ENCODE measurements at regions of chr9 and their contacts with region 1.

Region 1: DNA sequence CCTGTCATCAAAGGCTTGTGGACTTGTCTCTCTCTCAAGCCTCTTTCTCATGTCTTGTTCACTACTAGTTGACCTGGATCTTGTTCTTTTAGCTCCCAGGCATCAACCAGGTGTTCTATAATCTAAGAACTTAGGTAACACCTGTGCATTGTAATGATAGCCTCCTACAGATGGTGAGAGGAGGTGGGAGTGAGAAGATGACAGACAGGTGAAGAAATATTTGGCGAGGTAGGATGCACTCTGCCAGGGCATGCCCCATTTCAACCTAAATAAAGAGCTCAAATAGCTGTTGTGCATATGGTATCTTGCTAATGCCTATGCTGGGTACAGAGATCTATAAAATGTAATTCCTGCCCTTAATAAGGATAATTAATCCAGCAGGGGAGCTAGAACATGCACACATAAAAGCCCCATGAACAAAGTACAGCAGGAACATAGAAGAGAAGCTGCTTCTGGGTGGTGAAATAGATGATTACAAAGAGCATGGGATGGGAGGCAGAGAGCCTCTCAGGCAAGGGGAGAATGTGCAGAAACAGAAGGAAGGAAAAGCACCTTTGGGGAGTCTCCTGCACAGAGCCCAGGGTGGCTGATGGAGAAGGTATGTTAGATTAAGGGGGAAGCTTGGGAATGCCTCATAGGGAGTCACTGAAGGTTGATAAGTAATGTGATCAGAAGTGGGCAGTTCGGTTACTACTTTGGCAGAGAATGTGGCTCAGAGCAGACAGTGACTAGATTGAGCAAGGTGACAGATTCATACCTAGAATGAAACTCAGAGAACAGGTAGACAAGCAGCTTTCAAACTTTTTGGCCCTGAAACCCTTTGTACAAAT is 28.0 kb upstream of the PLIN2 start:
- DNase-seq: peak; percentile 26
- H3K4me3 Mint-ChIP-seq: no peak overlapping the region
- H3K27ac Mint-ChIP-seq: no peak overlapping the region
- H3K4me1 Mint-ChIP-seq: peaks cover 31% of the 10 kb centered on the region
- H3K27me3 Mint-ChIP-seq: no peaks in the 10 kb centered on the region

Region 2: DNA sequence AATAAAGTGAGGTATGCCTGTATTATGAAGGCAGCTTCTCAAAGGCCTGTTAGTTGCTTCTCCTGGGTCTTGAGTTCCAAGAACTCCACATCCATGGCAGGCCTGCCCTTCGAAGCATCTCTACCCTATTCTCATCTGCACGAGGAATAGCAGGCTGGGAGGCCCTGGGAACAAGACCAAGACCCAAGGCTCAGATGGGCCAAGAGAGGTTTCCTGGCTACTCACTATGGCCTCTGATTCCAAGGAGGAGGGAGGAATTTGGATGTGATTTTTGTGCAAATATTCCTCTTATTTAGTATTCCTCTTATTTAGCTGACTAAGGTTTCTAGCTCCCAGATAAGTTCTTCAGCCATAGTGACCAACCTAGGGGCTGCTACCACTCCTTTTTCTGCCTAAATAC is 273.6 kb before region 1 on chr9:
- CTCF ChIA-PET with region 1: no interaction called
- intact Hi-C with region 1: no loop called
- DNase-seq: no peak
- H3K4me3 Mint-ChIP-seq: no peak overlapping the region
- H3K27ac Mint-ChIP-seq: no peak overlapping the region
- H3K4me1 Mint-ChIP-seq: no peaks in the 10 kb centered on the region
- H3K27me3 Mint-ChIP-seq: peaks cover 14% of the 10 kb centered on the region

Region 3: GRCh38 chr9:19133549-19134345 is 21.6 kb before region 1 on chr9:
- CTCF ChIA-PET with region 1: interaction called, 10 read pairs
- intact Hi-C with region 1: no loop called
- DNase-seq: no peak
- H3K4me3 Mint-ChIP-seq: no peak overlapping the region
- H3K27ac Mint-ChIP-seq: no peak overlapping the region
- H3K4me1 Mint-ChIP-seq: peaks cover 16% of the 10 kb centered on the region
- H3K27me3 Mint-ChIP-seq: no peaks in the 10 kb centered on the region

Measured in activated naive CD4-positive, alpha-beta T cell treated with anti-CD3 and anti-CD28 coated beads for 36 hours (primary cell).